Activated CD4-positive, alpha-beta memory T cell treated with anti-CD3 and anti-CD28 coated beads for 36 hours (primary cell): ENCODE measurements at regions of chr17 and their contacts with region 1.

Region 1: DNA sequence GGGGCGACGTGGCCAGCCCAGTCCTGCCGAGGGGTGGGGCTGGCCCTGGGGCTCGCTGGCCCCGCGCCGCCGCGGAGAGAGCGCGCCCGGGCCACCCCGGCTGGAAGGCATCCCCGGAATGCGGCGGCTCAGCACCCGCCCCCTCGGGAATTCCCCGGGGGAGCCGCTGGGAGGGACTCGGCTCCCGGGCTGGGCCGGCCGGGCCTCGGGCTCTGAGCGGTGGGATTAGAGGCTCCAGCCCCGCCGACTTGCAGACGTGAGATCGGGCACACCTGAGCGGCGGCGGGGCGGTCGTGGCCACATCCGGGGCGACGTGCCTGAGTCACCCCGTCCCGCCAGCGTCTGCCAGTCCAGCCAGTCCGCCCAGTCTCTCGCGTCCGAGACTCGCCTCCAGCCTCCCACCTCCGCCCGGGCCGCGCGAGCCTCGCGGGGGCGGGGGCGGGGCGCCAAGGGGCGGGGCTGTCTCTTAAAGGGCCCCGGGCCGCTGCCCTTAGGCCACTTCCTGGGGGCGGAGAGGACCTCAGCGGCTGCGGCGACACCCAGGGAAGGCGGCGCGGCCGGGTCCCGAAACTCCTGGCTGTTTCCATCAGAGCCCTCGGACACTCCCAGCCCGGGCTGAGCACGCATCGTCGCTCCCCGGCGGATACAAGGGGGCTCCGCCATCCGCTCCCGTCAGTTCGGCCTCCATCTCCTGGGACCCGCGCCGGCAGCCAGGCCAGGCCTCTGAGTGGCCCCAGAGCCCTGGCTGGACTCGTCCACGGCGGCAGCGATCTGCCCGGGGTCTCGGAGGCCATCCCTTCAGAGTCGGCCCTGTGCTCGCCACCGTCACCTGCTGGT is at the start of gene KCTD11:
- DNase-seq: peak; percentile 87
- H3K4me3 Mint-ChIP-seq: peak within 1 kb of the TSS; percentile 74
- H3K27ac Mint-ChIP-seq: peak within 1 kb of the TSS; percentile 68
- H3K4me1 Mint-ChIP-seq: peaks cover 39% of the 10 kb centered on the region
- H3K27me3 Mint-ChIP-seq: no peaks in the 10 kb centered on the region
- total RNA-seq, gene KCTD11: 2.6 to 2.8 TPM

Region 2: GRCh38 chr17:7204828-7205461 is 146.9 kb before region 1 on chr17:
- CTCF ChIA-PET with region 1: no interaction called
- POLR2A ChIA-PET with region 1: no interaction called
- intact Hi-C with region 1: no loop called
- DNase-seq: peak; percentile 94
- H3K4me3 Mint-ChIP-seq: peak overlapping the region; percentile 36
- H3K27ac Mint-ChIP-seq: peak overlapping the region; percentile 30
- H3K4me1 Mint-ChIP-seq: peaks cover 21% of the 10 kb centered on the region
- H3K27me3 Mint-ChIP-seq: no peaks in the 10 kb centered on the region

Region 3: GRCh38 chr17:7280519-7281429 is 71.1 kb before region 1 on chr17:
- CTCF ChIA-PET with region 1: interaction called, 4 read pairs
- POLR2A ChIA-PET with region 1: no interaction called
- intact Hi-C with region 1: loop called (anchors 1 kb)
- DNase-seq: peak; percentile 91
- H3K4me3 Mint-ChIP-seq: peak overlapping the region; percentile 65
- H3K27ac Mint-ChIP-seq: no peak overlapping the region
- H3K4me1 Mint-ChIP-seq: peaks cover 12% of the 10 kb centered on the region
- H3K27me3 Mint-ChIP-seq: peaks cover 16% of the 10 kb centered on the region

Region 4: GRCh38 chr17:7329374-7329996 is 22.4 kb before region 1 on chr17:
- CTCF ChIA-PET with region 1: interaction called, 30 read pairs
- POLR2A ChIA-PET with region 1: no interaction called
- intact Hi-C with region 1: loop called (anchors 2 kb)
- DNase-seq: peak; percentile 98
- H3K4me3 Mint-ChIP-seq: peak overlapping the region; percentile 89
- H3K27ac Mint-ChIP-seq: peak overlapping the region; percentile 94
- H3K4me1 Mint-ChIP-seq: peaks cover 41% of the 10 kb centered on the region
- H3K27me3 Mint-ChIP-seq: no peaks in the 10 kb centered on the region

Region 5: DNA sequence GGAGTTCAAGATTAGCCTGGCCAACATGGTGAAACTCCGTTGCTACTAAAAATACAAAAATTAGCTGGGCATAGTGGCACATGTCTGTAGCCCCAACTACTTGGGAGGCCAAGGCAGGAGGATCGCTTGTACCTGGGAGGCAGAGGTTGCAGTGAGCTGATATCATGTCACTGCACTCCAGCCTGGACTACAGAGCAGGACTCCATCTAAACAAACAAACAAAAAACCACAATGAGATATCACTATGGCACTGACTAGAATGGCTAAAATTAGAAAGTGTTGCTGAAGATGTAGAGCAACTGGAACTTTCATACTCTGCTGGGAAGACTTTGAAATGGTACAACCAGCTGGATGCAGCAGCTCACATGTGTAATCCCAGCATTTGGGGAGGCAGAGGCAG is 22.5 kb after region 1 on chr17:
- CTCF ChIA-PET with region 1: interaction called, 14 read pairs
- POLR2A ChIA-PET with region 1: no interaction called
- intact Hi-C with region 1: no loop called
- DNase-seq: no peak
- H3K4me3 Mint-ChIP-seq: no peak overlapping the region
- H3K27ac Mint-ChIP-seq: no peak overlapping the region
- H3K4me1 Mint-ChIP-seq: no peaks in the 10 kb centered on the region
- H3K27me3 Mint-ChIP-seq: peaks cover 5% of the 10 kb centered on the region

Region 6: DNA sequence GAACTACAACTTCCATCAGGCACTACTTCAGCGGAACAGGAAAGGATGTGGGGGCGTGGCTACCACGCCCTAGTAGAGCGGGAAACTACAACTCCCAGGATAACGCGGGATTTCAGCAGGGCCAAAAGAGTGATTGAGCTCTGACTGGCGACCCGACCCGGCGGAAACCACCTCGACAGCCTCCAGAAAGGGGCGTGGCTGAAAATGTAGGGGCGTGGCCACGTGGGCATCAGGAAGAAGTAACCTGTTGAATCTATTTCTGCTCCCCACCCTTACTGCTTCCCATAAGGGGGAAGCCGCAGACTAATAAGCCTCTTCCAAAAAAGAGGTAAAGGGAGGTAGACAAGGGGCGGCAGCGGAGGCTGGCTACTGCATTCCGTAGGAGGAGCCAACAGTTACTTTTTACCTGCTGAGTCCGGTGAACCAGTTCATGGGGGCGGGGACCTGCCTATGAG is 83.4 kb after region 1 on chr17 and contains the start of gene TMEM102:
- CTCF ChIA-PET with region 1: interaction called, 71 read pairs
- POLR2A ChIA-PET with region 1: interaction called, 4 read pairs
- intact Hi-C with region 1: loop called (anchors 2 kb)
- DNase-seq: peak; percentile 99
- H3K4me3 Mint-ChIP-seq: peak within 1 kb of the TSS; percentile 91
- H3K27ac Mint-ChIP-seq: peak within 1 kb of the TSS; percentile 95
- H3K4me1 Mint-ChIP-seq: peaks cover 36% of the 10 kb centered on the region
- H3K27me3 Mint-ChIP-seq: peaks cover 15% of the 10 kb centered on the region
- total RNA-seq, gene TMEM102: 11.4 to 11.6 TPM

Region 7: DNA sequence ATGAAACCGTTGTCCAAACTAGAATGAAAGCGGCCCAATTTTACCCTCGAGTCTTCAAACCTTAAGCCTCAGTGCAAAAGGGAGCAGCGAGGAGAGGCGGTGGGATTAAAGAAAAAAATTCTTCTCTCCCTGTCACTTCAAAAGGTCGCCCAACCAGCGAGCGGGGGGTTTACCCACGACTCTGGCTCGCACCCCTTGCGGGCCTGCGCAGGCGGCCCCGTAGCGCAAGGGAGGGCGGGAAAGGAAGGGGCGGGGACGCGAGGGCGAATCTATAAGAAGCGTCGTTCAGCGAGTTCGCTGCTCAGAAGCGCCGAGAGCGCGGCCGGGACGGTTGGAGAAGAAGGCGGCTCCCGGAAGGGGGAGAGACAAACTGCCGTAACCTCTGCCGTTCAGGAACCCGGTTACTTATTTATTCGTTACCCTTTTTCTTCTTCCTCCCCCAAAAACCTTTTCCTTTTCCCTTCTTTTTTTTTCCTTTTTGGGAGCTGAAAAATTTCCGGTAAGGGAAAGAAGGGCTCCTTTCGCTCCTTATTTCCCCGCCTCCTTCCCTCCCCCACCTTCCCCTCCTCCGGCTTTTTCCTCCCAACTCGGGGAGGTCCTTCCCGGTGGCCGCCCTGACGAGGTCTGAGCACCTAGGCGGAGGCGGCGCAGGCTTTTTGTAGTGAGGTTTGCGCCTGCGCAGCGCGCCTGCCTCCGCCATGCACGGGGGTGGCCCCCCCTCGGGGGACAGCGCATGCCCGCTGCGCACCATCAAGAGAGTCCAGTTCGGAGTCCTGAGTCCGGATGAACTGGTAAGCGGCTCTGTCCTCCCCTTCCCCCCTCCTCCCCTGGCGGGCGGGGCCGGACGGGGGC is 132.4 kb after region 1 on chr17 and contains the start of gene POLR2A:
- CTCF ChIA-PET with region 1: interaction called, 6 read pairs
- POLR2A ChIA-PET with region 1: interaction called, 4 read pairs
- intact Hi-C with region 1: loop called (anchors 5 kb)
- DNase-seq: peak; percentile 97
- H3K4me3 Mint-ChIP-seq: peak within 1 kb of the TSS; percentile 98
- H3K27ac Mint-ChIP-seq: peak within 1 kb of the TSS; percentile 100
- H3K4me1 Mint-ChIP-seq: peaks cover 69% of the 10 kb centered on the region
- H3K27me3 Mint-ChIP-seq: no peaks in the 10 kb centered on the region
- total RNA-seq, gene POLR2A: 180 to 187 TPM

Region 8: GRCh38 chr17:7561028-7561575 is 209.2 kb after region 1 on chr17:
- CTCF ChIA-PET with region 1: interaction called, 29 read pairs
- POLR2A ChIA-PET with region 1: interaction called, 4 read pairs
- intact Hi-C with region 1: loop called (anchors 2 kb)
- DNase-seq: peak; percentile 92
- H3K4me3 Mint-ChIP-seq: peak overlapping the region; percentile 91
- H3K27ac Mint-ChIP-seq: peak overlapping the region; percentile 91
- H3K4me1 Mint-ChIP-seq: peaks cover 32% of the 10 kb centered on the region
- H3K27me3 Mint-ChIP-seq: no peaks in the 10 kb centered on the region

Region 9: DNA sequence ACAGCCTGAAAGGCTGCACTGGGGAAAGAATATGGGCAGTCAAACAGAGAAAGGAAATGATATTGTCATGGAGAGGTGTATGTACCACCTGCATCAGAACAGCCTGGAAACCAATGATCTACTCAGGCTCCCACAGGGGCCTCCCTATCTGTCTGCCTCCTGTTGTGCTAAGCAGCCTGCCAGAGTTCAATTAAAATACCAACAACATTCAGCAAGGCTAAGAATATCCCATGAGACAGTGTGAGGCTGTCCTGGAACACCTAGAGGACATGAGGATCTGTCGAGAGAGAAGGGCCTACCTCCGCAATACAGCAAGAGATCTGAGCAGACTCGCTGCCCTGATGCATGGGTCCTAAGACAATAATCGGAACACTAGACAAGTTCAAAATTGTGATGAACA is 254.4 kb after region 1 on chr17:
- CTCF ChIA-PET with region 1: no interaction called
- POLR2A ChIA-PET with region 1: no interaction called
- intact Hi-C with region 1: no loop called
- DNase-seq: no peak
- H3K4me3 Mint-ChIP-seq: no peak overlapping the region
- H3K27ac Mint-ChIP-seq: no peak overlapping the region
- H3K4me1 Mint-ChIP-seq: peaks cover 15% of the 10 kb centered on the region
- H3K27me3 Mint-ChIP-seq: no peaks in the 10 kb centered on the region